ENCODE measurements at regions of chr1 and their contacts with region 1.

Region 1: GRCh38 chr1:167721617-167722151 is at the start of gene MPZL1:
- ATAC-seq: peak; percentile 94 to 98 (median 96)
- H3K4me3 ChIP-seq: peak within 1 kb of the TSS; percentile 77 to 97 (median 92)
- H3K27ac ChIP-seq: peak within 1 kb of the TSS; percentile 78 to 79
- H3K4me1 ChIP-seq: peaks cover 20 to 24% of the 10 kb centered on the region in 2 donors
- total RNA-seq, gene MPZL1: 34.0 to 146 (median 102) TPM

Region 2: DNA sequence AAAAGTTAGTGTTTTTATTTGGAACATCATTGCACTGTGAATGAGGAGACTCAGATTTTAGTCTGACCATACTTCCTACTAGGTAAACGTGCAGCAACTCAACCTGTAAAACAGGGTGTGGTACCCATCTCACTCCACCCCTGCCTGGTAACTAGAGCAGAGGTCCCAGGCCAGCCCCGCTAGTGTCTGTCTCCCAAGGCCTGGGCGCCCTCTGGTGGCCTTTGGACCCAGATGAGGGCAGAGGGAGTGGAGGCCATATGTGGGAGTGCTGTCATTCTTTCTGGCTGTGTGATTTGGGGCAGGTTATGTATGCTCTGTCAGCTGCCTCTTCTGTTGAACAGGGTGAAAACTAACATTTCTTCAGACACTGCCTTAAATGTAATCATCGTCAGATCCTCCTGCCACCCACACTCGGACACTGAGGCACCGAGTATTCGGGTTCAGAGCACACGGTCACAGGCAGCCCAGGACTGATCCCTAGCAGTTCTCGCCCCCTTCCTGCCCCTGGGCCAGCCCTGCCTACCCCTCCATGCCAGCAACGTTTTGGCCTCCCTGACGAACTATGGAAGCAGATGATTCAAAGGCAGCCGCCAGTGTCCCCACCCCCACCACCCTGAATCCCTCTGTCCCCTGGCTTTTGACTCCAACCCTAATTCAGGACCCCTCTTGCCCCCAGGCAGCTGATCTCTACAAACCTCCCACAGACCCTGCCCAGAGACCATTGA is 279.4 kb before region 1 on chr1:
- in situ Hi-C with region 1: no loop called
- ATAC-seq: peak; percentile 77 to 96 (median 85)
- H3K4me3 ChIP-seq: no peak overlapping the region
- H3K27ac ChIP-seq: no peak overlapping the region
- H3K4me1 ChIP-seq: peaks cover 0 to 7% of the 10 kb centered on the region in 2 donors

Region 3: GRCh38 chr1:167803358-167804207 is 81.9 kb after region 1 on chr1:
- in situ Hi-C with region 1: loop called in 1 of 9 experiments (anchors 10 kb)
- ATAC-seq: peak in 4 of 8 experiments; percentile 54 to 100 (median 99)
- H3K4me3 ChIP-seq: no peak overlapping the region
- H3K27ac ChIP-seq: no peak overlapping the region
- H3K4me1 ChIP-seq: no peaks in the 10 kb centered on the region